A673 (cell line): ENCODE measurements at regions of chr14 and their contacts with region 1.

Region 1: GRCh38 chr14:97233319-97233985 is 436.3 kb downstream of the VRK1 start:
- DNase-seq: peak; percentile 63
- H3K4me3 ChIP-seq: no peak overlapping the region
- H3K27ac ChIP-seq: peak overlapping the region; percentile 93
- H3K4me1 ChIP-seq: peaks cover 58% of the 10 kb centered on the region
- H3K27me3 ChIP-seq: no peaks in the 10 kb centered on the region
- CTCF ChIP-seq: no peak

Region 2: DNA sequence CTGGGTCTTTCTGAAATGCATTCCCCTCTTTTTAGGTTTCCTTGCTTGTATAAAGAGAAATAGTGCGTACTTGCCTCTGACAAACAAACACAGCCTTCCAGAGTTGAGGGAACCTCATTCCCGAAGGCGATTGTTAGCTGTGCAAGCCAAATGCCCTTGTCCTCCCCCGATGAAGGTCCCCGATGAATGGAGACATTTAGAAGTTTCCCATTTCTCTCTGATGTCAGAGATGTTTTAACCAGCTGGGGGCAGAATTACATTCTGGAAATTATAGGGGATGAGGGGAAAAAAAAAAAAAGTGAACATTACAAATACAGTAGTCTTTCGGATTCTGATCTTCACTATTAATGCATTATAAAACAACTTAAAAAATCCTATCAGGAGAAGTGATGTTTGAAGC is 69.4 kb before region 1 on chr14:
- CTCF ChIA-PET with region 1: no interaction called
- POLR2A ChIA-PET with region 1: interaction called, 10 read pairs
- intact Hi-C with region 1: no loop called
- DNase-seq: peak; percentile 84
- H3K4me3 ChIP-seq: no peak overlapping the region
- H3K27ac ChIP-seq: peak overlapping the region; percentile 73
- H3K4me1 ChIP-seq: peaks cover 29% of the 10 kb centered on the region
- H3K27me3 ChIP-seq: no peaks in the 10 kb centered on the region
- CTCF ChIP-seq: peak; percentile 62

Region 3: GRCh38 chr14:98494582-98494981 is 1261.1 kb after region 1 on chr14:
- CTCF ChIA-PET with region 1: no interaction called
- POLR2A ChIA-PET with region 1: no interaction called
- intact Hi-C with region 1: loop called (anchors 5 kb)
- DNase-seq: peak; percentile 52
- H3K4me3 ChIP-seq: no peak overlapping the region
- H3K27ac ChIP-seq: no peak overlapping the region
- H3K4me1 ChIP-seq: peaks cover 25% of the 10 kb centered on the region
- H3K27me3 ChIP-seq: no peaks in the 10 kb centered on the region
- CTCF ChIP-seq: no peak